Left ventricle myocardium inferior (tissue), 1 donor: ENCODE measurements at regions of chr2 and their contacts with region 1.

Region 1: GRCh38 chr2:72993147-72993932 is 76.0 kb downstream of the EMX1 start:
- DNase-seq: no peak
- H3K4me3 ChIP-seq: no peak overlapping the region
- H3K27ac ChIP-seq: no peak overlapping the region
- H3K4me1 ChIP-seq: peaks cover 14% of the 10 kb centered on the region
- H3K27me3 ChIP-seq: no peaks in the 10 kb centered on the region
- CTCF ChIP-seq: peak; percentile 83

Region 2: GRCh38 chr2:73142937-73143336 is 149.6 kb after region 1 on chr2:
- intact Hi-C with region 1: no loop called
- DNase-seq: no peak
- H3K4me3 ChIP-seq: no peak overlapping the region
- H3K27ac ChIP-seq: no peak overlapping the region
- H3K4me1 ChIP-seq: no peaks in the 10 kb centered on the region
- H3K27me3 ChIP-seq: peaks cover 12% of the 10 kb centered on the region
- CTCF ChIP-seq: no peak

Region 3: GRCh38 chr2:73156539-73157124 is 163.3 kb after region 1 on chr2:
- intact Hi-C with region 1: loop called (anchors 10 kb)
- DNase-seq: peak; percentile 61
- H3K4me3 ChIP-seq: no peak overlapping the region
- H3K27ac ChIP-seq: no peak overlapping the region
- H3K4me1 ChIP-seq: peaks cover 7% of the 10 kb centered on the region
- H3K27me3 ChIP-seq: peaks cover 41% of the 10 kb centered on the region
- CTCF ChIP-seq: peak; percentile 87